Right ventricle myocardium inferior (tissue), 1 donor: ENCODE measurements at regions of chr1 and their contacts with region 1.

Region 1: GRCh38 chr1:93447516-93448291 is at the start of gene FNBP1L:
- DNase-seq: peak; percentile 87
- ATAC-seq: peak; percentile 97
- total RNA-seq, gene FNBP1L: 24.8 TPM

Region 2: GRCh38 chr1:93331412-93331811 is 116.3 kb before region 1 on chr1:
- intact Hi-C with region 1: no loop called
- DNase-seq: no peak
- ATAC-seq: no peak

Region 3: DNA sequence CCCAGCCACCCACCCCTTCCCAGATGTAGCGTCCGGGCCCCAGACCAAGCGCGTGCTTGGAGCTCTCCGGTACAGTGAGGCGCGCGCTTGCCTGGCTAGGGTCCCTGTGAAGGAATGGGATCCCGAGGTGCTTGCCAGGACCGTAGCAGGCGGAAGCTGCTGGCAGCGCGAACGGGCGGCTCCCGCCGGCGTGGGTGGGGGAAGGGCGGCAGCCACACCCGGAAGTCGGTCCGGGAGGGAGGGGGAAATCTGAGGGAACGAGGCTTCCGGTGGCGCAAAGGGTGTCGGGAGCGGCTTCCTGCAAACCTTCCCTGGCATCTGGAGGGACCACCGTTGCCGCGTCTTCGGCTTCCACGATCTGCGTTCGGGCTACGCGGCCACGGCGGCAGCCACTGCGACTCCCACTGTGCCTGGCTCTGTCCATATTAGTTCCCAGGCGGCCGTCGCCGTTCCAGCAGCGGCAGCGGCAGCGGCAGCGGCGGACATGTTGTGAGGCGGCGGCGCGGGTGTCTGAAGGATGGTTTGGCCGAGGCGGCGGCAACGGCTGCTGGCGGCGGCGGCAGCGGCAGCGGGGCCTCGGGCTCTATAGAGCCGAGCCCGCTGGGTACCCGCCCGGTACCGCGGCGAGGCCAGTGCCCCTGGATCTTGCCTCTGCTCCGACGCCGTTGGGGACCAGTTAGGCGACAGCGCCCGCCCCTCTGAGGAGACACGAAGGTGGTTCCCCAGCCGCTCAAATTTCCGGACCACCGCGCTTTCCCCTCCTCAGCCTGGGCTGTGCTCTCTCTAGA is 101.9 kb before region 1 on chr1 and contains the start of gene DR1:
- intact Hi-C with region 1: loop called (anchors 5 kb)
- DNase-seq: peak; percentile 96
- ATAC-seq: peak; percentile 97
- total RNA-seq, gene DR1: 37.1 TPM

Region 4: GRCh38 chr1:93537924-93538323 is 90.2 kb after region 1 on chr1:
- intact Hi-C with region 1: no loop called
- DNase-seq: no peak
- ATAC-seq: no peak